CD14-positive monocyte (primary cell): ENCODE measurements at regions of chr2 and their contacts with region 1.

Region 1: GRCh38 chr2:55099878-55100820 is 49.9 kb upstream of the RTN4 start:
- DNase-seq: peak; percentile 42 to 82 (median 52)
- H3K4me3 ChIP-seq: peak overlapping the region in 1 of 3 experiments; percentile 59
- H3K4me3 Mint-ChIP-seq: peak overlapping the region; percentile 1 to 36
- H3K27ac ChIP-seq: peak overlapping the region; percentile 50 to 87
- H3K27ac Mint-ChIP-seq: peak overlapping the region; percentile 82 to 93 (median 90)
- H3K4me1 ChIP-seq: peaks cover 36 to 69% of the 10 kb centered on the region in 2 donors
- H3K4me1 Mint-ChIP-seq: peaks cover 21% of the 10 kb centered on the region
- H3K27me3 ChIP-seq: no peaks in the 10 kb centered on the region
- H3K27me3 Mint-ChIP-seq: no peaks in the 10 kb centered on the region
- CTCF ChIP-seq: no peak

Region 2: GRCh38 chr2:54574107-54574859 is 525.9 kb before region 1 on chr2:
- intact Hi-C with region 1: no loop called
- DNase-seq: peak; percentile 79 to 84 (median 80)
- H3K4me3 ChIP-seq: no peak overlapping the region
- H3K4me3 Mint-ChIP-seq: no peak overlapping the region
- H3K27ac ChIP-seq: peak overlapping the region; percentile 36 to 50
- H3K27ac Mint-ChIP-seq: peak overlapping the region; percentile 27 to 94 (median 66)
- H3K4me1 ChIP-seq: peaks cover 48 to 59% of the 10 kb centered on the region in 2 donors
- H3K4me1 Mint-ChIP-seq: peaks cover 76% of the 10 kb centered on the region
- H3K27me3 ChIP-seq: no peaks in the 10 kb centered on the region
- H3K27me3 Mint-ChIP-seq: no peaks in the 10 kb centered on the region
- CTCF ChIP-seq: no peak

Region 3: DNA sequence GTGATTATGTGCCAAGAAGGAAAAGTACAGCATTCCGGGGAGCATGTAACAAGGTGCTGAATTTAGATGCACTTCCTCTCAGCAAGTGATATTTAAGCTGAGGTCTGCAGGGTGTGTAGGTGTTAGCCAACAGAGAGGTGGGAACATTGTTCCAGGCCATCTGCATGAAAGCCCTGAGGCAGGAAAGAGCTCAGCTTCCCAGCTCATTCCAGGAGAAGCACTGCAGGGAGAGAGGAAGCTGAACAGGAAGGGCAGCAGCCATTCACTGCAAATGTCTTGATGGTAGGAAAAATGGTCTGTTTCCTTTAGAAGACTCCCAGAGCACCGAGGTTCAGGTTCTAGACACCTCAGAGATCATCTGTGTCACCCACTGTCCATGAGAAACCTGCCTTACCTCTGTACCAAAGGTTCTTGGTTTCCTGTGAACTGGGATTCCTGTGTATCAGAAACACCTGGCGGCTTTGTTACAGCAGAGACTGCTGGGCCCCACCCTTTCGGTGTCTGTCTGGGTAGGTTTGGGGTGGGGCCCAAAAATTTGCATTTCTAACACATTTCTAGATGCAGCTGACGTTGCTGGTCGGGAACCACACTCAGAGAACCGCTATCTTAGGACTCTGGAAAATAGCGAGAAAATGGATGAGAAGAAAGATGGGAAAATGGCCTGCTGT is 133.8 kb before region 1 on chr2:
- intact Hi-C with region 1: no loop called
- DNase-seq: no peak
- H3K4me3 ChIP-seq: no peak overlapping the region
- H3K4me3 Mint-ChIP-seq: no peak overlapping the region
- H3K27ac ChIP-seq: no peak overlapping the region
- H3K27ac Mint-ChIP-seq: peak overlapping the region in 2 of 7 donors; percentile 20 to 22
- H3K4me1 ChIP-seq: no peaks in the 10 kb centered on the region
- H3K4me1 Mint-ChIP-seq: peaks cover 3% of the 10 kb centered on the region
- H3K27me3 ChIP-seq: no peaks in the 10 kb centered on the region
- H3K27me3 Mint-ChIP-seq: no peaks in the 10 kb centered on the region
- CTCF ChIP-seq: no peak

Region 4: GRCh38 chr2:55141572-55142413 is 41.6 kb after region 1 on chr2:
- intact Hi-C with region 1: loop called in 1 of 2 experiments (anchors 5 kb)
- DNase-seq: no peak
- H3K4me3 ChIP-seq: no peak overlapping the region
- H3K4me3 Mint-ChIP-seq: no peak overlapping the region
- H3K27ac ChIP-seq: no peak overlapping the region
- H3K27ac Mint-ChIP-seq: peak overlapping the region in 2 of 7 donors; percentile 7 to 60
- H3K4me1 ChIP-seq: peaks cover 17 to 19% of the 10 kb centered on the region in 2 donors
- H3K4me1 Mint-ChIP-seq: peaks cover 20% of the 10 kb centered on the region
- H3K27me3 ChIP-seq: no peaks in the 10 kb centered on the region
- H3K27me3 Mint-ChIP-seq: peaks cover 0 to 6% (median 0%) of the 10 kb centered on the region in 3 donors
- CTCF ChIP-seq: no peak